K562 (cell line): ENCODE measurements at regions of chr3 and their contacts with region 1.

Region 1: GRCh38 chr3:14371573-14372474 is 30.6 kb upstream of the SLC6A6 start:
- DNase-seq: peak; percentile 93 to 97 (median 93)
- ATAC-seq: peak; percentile 94
- H3K4me3 ChIP-seq: no peak overlapping the region
- H3K27ac ChIP-seq: peak overlapping the region; percentile 6; the same call in 2 of the 3 replicates
- H3K4me1 ChIP-seq: peaks cover 40 to 67% of the 10 kb centered on the region in 2 experiments
- H3K27me3 ChIP-seq: no peaks in the 10 kb centered on the region
- CTCF ChIP-seq: peak; percentile 13 to 44 (median 16); a peak in 3 of 6 replicates
- EP300 ChIP-seq: peak; percentile 53
- POLR2A ChIP-seq: no peak
- RAD21 ChIP-seq: 0 out of 4 replicates have a peak, but pooled peaks of 1 of the 2 experiments have one; percentile 8

Region 2: DNA sequence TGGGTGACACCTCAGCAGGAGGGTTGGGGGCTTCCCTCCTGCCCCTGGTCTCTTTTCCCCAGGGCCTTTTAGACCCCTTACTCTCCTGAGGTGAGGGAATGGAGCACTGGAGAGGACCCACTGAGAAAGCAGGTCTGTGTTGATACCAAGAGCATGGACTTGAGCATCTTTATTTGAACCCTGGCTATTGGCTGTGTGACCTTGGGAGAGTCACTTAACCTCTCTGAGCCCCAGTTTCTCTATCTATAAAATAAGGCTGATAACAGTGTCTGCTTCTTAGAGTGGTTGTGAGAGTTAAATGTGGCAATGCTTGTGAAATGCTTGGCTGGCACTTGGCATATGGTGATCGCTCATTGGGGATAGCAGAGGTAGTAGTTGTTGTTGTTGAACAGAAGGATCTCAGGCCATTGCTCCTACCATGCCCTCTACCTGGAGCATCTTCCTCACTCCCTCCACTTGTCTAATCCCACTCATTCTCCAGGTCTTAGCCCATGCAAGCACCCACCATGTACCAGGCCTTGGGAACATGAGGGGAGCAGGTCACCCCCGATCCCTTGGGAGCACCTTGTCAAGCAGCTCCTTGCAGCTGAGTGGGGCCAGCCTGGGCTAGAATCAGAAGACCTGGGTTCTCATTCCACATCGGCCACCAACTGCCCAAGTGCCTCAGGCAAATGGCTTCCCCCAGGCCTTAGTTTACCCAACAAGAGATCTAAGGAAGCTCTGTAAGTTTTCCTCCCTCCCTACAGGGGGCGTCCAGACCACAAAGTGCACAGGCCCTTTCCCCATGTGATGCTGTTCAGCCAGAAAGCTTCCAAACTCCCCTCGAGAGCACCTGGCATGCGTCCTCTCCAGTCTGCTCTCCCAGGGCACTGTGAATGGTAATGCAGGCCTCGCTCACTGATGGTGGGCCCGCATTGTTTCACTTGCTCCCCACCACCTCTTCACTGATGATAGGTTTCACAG is 96.5 kb before region 1 on chr3:
- CTCF ChIA-PET with region 1: no interaction called
- POLR2A ChIA-PET with region 1: interaction called, 3 read pairs
- in situ Hi-C with region 1: no loop called
- intact Hi-C with region 1: loop called (anchors 5 kb)
- DNase-seq: peak; percentile 64 to 78 (median 73)
- ATAC-seq: peak; percentile 65
- H3K4me3 ChIP-seq: no peak overlapping the region
- H3K27ac ChIP-seq: no peak overlapping the region
- H3K4me1 ChIP-seq: peaks cover 30 to 39% of the 10 kb centered on the region in 2 experiments
- H3K27me3 ChIP-seq: no peaks in the 10 kb centered on the region
- CTCF ChIP-seq: peak; percentile 60 to 78 (median 67)
- EP300 ChIP-seq: no peak
- POLR2A ChIP-seq: no peak
- RAD21 ChIP-seq: peak in 1 of 2 experiments; percentile 61; a peak in 2 of 4 replicates

Region 3: DNA sequence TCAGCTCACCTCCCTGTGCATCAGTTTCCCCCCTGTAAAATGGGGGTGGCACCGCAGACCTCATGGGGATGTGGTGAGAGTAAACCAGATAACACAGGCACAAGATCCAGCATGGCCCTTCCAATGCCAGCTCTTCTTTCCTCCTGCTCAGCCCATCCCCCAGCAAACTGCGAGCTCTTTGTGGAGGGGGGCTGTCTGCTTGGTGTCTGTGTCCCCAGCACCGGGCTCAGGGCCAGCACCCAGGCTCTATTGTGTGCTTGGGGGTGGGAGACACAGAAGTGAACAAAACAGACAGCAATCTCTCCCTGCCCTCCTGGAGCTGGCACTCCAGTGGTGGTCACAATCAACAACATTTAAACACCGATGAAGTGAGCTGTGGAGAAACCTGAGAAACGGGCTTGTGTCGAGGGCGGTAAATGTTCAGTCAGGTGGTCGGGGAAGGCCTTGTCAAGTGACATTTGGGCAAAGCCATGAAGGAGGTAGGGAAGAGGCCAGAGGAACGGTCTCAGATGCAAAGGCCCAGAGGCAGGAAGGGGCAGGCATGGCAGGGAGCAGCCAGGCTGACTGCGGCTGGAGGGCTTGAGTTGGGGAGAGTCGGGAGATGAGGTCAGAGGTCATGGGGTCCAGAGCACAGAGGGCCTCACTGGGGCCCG is 139.9 kb after region 1 on chr3:
- CTCF ChIA-PET with region 1: no interaction called
- POLR2A ChIA-PET with region 1: no interaction called
- in situ Hi-C with region 1: no loop called
- intact Hi-C with region 1: no loop called
- DNase-seq: no peak
- ATAC-seq: no peak
- H3K4me3 ChIP-seq: no peak overlapping the region
- H3K27ac ChIP-seq: no peak overlapping the region
- H3K4me1 ChIP-seq: peaks cover 0 to 24% of the 10 kb centered on the region in 2 experiments; a peak in 2 of 5 replicates
- H3K27me3 ChIP-seq: peaks cover 23 to 54% of the 10 kb centered on the region in 2 experiments
- CTCF ChIP-seq: no peak
- EP300 ChIP-seq: no peak
- POLR2A ChIP-seq: no peak
- RAD21 ChIP-seq: no peak

Region 4: DNA sequence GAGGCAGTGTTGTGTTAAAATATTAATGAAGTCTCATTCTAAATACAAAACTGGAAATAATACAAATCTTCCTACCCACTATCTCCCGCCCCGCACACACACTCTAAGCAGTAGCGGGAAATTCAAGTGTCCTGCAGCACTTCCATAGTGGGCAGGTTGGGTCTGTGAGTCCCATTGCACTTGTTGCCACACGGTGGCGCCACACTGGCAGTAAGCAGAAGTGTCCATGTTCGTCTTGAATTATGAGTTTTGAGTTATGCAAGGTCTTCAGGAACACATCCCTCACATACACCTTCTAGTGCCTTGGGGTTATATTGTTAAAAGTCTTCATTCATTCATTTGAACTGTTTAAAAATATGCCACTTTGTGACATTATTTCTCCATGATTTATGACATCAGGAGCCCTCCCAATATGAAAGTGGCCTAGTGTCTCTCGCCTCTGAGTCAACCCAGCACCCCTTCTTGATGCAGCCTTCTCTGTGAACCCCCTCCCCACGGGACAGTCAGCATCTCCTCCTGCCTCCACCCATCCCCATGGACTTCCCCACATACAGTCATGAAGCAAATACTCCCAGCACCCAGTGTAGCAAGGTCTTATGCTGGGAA is 262.1 kb after region 1 on chr3:
- CTCF ChIA-PET with region 1: no interaction called
- POLR2A ChIA-PET with region 1: no interaction called
- in situ Hi-C with region 1: no loop called
- intact Hi-C with region 1: no loop called
- DNase-seq: peak; percentile 74 to 83 (median 81)
- ATAC-seq: peak; percentile 99
- H3K4me3 ChIP-seq: no peak overlapping the region
- H3K27ac ChIP-seq: no peak overlapping the region
- H3K4me1 ChIP-seq: no peaks in the 10 kb centered on the region
- H3K27me3 ChIP-seq: peaks cover 20 to 54% of the 10 kb centered on the region in 2 experiments; a peak in 4 of 5 replicates
- CTCF ChIP-seq: peak; percentile 90 to 96 (median 93)
- EP300 ChIP-seq: no peak
- POLR2A ChIP-seq: no peak
- RAD21 ChIP-seq: peak; percentile 67 to 92